ENCODE measurements at regions of chr15 and their contacts with region 1.

Region 1: GRCh38 chr15:69058830-69059556 is 44.5 kb downstream of the NOX5 start:
- DNase-seq: peak; percentile 46
- H3K4me3 Mint-ChIP-seq: no peak overlapping the region
- H3K27ac Mint-ChIP-seq: no peak overlapping the region
- H3K4me1 Mint-ChIP-seq: peaks cover 21% of the 10 kb centered on the region
- H3K27me3 Mint-ChIP-seq: peaks cover 11% of the 10 kb centered on the region

Region 2: GRCh38 chr15:69074001-69074842 is 15.2 kb after region 1 on chr15:
- intact Hi-C with region 1: no loop called
- DNase-seq: no peak
- H3K4me3 Mint-ChIP-seq: no peak overlapping the region
- H3K27ac Mint-ChIP-seq: no peak overlapping the region
- H3K4me1 Mint-ChIP-seq: peaks cover 7% of the 10 kb centered on the region
- H3K27me3 Mint-ChIP-seq: peaks cover 36% of the 10 kb centered on the region

Region 3: DNA sequence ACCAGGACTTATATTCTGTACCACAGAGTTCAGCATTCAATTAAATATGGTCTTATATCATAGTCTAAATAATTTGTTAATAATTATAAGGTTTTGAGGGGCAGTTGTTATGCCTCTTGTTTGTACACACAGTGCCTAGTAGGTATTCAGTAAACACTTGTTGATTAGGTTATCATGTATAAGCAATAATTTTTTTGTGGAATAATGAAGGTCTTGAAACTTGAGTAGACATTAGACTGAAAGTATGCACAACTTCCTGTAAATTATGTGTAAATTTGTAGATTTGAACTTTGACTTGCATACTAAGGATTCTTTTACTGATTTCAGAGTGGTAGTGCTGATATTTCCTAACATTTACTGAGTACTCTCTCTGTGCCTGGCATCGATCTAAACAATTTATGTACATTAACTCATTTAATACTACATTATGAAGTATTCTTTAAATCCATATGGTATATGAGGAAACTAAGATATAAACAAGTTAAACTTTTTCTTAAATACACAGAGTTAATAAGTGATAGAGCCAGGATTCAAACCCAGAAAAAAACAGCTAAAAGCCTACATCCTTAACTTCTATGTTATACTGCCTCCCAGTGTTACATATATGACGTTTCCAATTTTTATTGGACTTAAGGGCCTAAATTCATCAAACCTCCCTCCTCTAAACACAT is 166.5 kb after region 1 on chr15:
- intact Hi-C with region 1: loop called (anchors 1 kb)
- DNase-seq: no peak
- H3K4me3 Mint-ChIP-seq: no peak overlapping the region
- H3K27ac Mint-ChIP-seq: no peak overlapping the region
- H3K4me1 Mint-ChIP-seq: no peaks in the 10 kb centered on the region
- H3K27me3 Mint-ChIP-seq: no peaks in the 10 kb centered on the region

Region 4: GRCh38 chr15:69265347-69265955 is 206.5 kb after region 1 on chr15:
- intact Hi-C with region 1: loop called (anchors 1 kb)
- DNase-seq: no peak
- H3K4me3 Mint-ChIP-seq: no peak overlapping the region
- H3K27ac Mint-ChIP-seq: no peak overlapping the region
- H3K4me1 Mint-ChIP-seq: no peaks in the 10 kb centered on the region
- H3K27me3 Mint-ChIP-seq: no peaks in the 10 kb centered on the region

Region 5: GRCh38 chr15:69394556-69395282 is 335.7 kb after region 1 on chr15:
- intact Hi-C with region 1: loop called (anchors 1 kb)
- DNase-seq: peak; percentile 68
- H3K4me3 Mint-ChIP-seq: no peak overlapping the region
- H3K27ac Mint-ChIP-seq: no peak overlapping the region
- H3K4me1 Mint-ChIP-seq: peaks cover 7% of the 10 kb centered on the region
- H3K27me3 Mint-ChIP-seq: peaks cover 7% of the 10 kb centered on the region

Region 6: DNA sequence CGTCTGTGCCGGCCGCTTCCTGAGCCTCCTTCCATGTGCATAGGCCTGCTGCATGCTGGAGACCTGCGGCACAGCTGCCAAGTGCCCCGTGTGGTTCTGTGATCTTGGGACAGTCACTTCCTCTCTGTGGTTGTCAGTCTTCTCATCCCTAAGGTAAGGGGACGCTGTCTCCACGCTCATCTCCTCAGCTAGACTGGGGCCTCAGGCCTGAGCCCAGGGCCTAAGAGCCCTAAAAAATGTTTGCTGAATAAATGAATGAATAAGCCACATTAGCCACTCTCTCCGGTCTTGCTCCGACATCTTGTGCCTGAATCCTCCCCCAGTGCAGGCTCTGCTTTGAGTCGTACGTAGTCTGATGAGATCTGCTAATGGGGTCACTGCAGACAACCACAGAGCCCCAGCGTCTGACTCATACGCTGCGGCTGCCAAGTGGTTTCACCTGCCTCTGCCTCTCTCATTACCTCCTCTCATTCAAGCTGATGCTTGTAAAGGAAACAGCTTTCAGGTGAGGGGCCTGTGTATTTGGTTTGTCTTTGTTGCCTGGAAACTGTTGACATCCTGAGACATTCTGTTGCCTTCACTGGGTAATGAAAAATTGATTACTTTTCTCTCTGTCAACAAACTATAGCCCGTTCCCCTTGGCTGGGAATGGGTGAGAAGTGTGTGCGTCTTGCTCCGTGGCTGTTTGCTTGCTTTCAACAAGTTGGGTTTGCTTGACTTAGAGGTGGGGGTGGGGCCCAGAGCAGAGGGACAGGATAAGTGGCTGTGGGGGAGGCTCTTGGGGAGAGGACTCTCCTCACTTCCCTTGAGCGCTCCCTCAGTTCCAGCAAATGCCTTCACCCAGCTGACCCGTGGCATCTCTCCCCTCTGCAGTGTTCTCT is 409.5 kb after region 1 on chr15:
- intact Hi-C with region 1: loop called (anchors 1 kb)
- DNase-seq: peak; percentile 75
- H3K4me3 Mint-ChIP-seq: peak overlapping the region; percentile 61
- H3K27ac Mint-ChIP-seq: peak overlapping the region; percentile 90
- H3K4me1 Mint-ChIP-seq: peaks cover 24% of the 10 kb centered on the region
- H3K27me3 Mint-ChIP-seq: peaks cover 13% of the 10 kb centered on the region

Region 7: GRCh38 chr15:69523010-69524001 is 464.3 kb after region 1 on chr15:
- intact Hi-C with region 1: no loop called
- DNase-seq: peak; percentile 49
- H3K4me3 Mint-ChIP-seq: no peak overlapping the region
- H3K27ac Mint-ChIP-seq: no peak overlapping the region
- H3K4me1 Mint-ChIP-seq: peaks cover 6% of the 10 kb centered on the region
- H3K27me3 Mint-ChIP-seq: peaks cover 16% of the 10 kb centered on the region